Posterior vena cava (tissue), 2 donors: ENCODE measurements at regions of chr4 and their contacts with region 1.

Region 1: GRCh38 chr4:185395956-185396723 is 416 bp upstream of the LRP2BP start:
- DNase-seq: peak; percentile 99

Region 2: GRCh38 chr4:185203486-185204237 is 192.5 kb before region 1 on chr4 and contains the start of gene CFAP97:
- intact Hi-C with region 1: loop called in 1 of 2 experiments (anchors 10 kb)
- DNase-seq: peak; percentile 98
- total RNA-seq, gene CFAP97: 42.6 to 52.9 TPM

Region 3: GRCh38 chr4:187321711-187322110 is 1925.6 kb after region 1 on chr4:
- intact Hi-C with region 1: no loop called
- DNase-seq: no peak